ENCODE measurements at regions of chr13 and their contacts with region 1.

Region 1: DNA sequence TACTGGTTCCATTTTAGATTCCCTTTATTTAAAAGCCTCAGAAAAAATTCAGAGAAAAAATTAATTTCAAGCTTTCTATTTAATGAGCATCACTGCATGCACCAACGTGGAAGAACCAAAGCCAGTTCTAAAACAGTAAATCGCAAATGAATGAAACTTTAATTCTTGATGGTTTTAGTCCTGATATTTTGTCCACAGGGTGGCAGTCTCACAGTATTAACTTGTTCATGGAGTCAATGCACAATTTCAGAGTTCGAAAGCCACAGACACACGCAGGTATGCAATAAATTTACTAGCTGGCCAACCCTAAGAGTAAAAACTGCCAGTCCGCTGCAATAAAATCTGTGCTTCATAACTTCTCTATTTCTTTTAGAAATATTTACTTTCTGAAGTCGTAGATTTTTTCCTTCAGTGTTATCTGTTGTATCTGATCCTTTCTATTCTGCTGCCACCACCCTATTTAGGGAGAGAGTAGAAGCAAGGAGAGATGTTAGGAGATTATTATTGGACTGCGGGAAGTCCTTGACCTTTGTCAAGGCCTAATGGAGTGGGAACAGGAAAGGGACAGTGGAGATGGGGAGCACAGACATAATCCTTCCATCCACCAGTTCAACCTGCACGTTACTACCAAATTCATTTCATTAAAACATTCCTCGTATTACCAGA is 7.0 kb upstream of the WBP4 start:
- DNase-seq: no peak

Region 2: DNA sequence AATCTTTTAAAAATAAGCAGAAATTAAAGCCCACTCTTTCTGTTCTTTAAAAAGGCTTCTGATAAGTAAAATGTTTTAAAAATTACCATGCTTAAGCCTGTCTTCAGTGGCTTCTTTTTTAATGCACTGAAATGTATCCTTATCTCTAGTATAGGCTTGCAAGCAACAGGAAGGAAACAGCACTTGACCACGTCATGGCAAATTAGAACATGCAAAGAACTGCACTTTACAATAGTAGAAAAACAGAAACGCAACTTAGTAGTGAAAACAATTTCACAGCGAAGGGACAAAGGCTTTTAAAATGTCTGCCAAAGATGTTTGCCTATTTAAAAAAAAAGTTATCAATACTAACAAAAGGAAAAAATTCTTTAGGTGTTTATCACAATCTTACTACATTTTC is 71.6 kb before region 1 on chr13:
- intact Hi-C with region 1: loop called in 1 of 2 experiments (anchors 10 kb)
- DNase-seq: no peak

Region 3: GRCh38 chr13:41178040-41178439 is 123.7 kb after region 1 on chr13:
- intact Hi-C with region 1: no loop called
- DNase-seq: no peak